ENCODE measurements at regions of chr2 and their contacts with region 1.

Region 1: GRCh38 chr2:122886479-122887145 is 1131.2 kb downstream of the TSN start:
- DNase-seq: no peak
- H3K4me3 ChIP-seq: no peak overlapping the region
- H3K27ac ChIP-seq: no peak overlapping the region
- H3K4me1 ChIP-seq: no peaks in the 10 kb centered on the region
- H3K27me3 ChIP-seq: no peaks in the 10 kb centered on the region
- CTCF ChIP-seq: no peak
- POLR2A ChIP-seq: no peak

Region 2: DNA sequence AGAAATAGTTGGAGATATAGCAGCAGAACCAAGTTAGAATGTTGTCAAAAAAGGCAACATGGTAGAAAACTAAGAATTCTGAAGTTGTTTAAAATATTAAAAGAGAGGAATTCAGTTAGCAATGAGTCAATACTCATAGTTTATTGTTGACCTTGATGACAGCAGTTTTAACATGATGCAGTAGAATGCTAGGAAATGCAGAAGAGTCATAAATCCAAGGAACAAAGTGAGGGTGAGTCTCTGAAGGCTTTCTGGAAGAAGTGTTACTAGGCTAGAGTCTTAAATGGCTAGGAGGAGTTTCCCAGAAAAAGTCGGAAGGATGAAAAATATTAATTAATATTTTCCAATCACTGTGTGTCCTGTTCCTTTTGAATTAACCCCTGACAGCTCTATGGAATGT is 323.8 kb before region 1 on chr2:
- intact Hi-C with region 1: no loop called
- DNase-seq: no peak
- H3K4me3 ChIP-seq: no peak overlapping the region
- H3K27ac ChIP-seq: no peak overlapping the region
- H3K4me1 ChIP-seq: no peaks in the 10 kb centered on the region
- H3K27me3 ChIP-seq: no peaks in the 10 kb centered on the region
- CTCF ChIP-seq: no peak
- POLR2A ChIP-seq: no peak

Region 3: DNA sequence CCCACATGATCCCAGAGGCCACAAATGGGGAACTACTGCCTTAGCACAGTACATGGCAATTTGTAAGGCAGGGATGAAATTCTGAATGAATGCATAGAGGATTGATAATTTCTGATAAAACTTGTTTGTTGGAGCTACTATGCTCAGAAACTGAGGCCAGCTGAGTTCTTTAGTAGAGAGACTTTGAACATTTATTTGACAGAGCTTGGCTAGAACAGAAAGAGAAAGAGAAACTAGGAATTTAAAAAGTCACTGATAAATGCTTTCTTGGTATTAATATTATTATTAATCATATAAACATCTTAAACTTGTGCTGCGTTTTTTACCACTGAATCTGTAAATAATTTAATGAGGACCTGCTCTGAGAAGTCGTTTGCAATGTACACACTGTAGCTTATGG is 214.8 kb after region 1 on chr2:
- intact Hi-C with region 1: loop called (anchors 5 kb)
- DNase-seq: no peak
- H3K4me3 ChIP-seq: no peak overlapping the region
- H3K27ac ChIP-seq: no peak overlapping the region
- H3K4me1 ChIP-seq: no peaks in the 10 kb centered on the region
- H3K27me3 ChIP-seq: no peaks in the 10 kb centered on the region
- CTCF ChIP-seq: no peak
- POLR2A ChIP-seq: no peak

Region 4: DNA sequence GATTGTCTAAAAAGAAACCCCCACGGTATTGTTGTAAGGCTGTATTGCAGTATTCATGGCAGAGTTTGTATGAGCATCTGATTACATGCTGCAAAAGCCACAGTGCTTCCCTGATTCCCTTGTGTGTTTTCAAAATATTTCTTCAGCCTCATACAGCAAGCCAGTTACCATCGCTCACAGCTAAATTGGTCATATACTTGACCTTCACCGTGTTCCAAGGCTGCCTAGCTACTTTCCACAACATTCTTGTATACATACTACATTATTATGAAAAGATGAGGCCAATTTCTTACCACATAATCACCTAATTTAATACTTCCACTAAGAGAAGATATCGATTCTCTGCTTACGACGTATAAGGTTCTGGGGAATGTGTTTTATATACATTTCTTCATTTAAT is 562.2 kb after region 1 on chr2:
- intact Hi-C with region 1: no loop called
- DNase-seq: no peak
- H3K4me3 ChIP-seq: no peak overlapping the region
- H3K27ac ChIP-seq: no peak overlapping the region
- H3K4me1 ChIP-seq: no peaks in the 10 kb centered on the region
- H3K27me3 ChIP-seq: no peaks in the 10 kb centered on the region
- CTCF ChIP-seq: no peak
- POLR2A ChIP-seq: no peak